Right cardiac atrium (tissue), 5 donors: ENCODE measurements at regions of chr2 and their contacts with region 1.

Region 1: GRCh38 chr2:222561817-222562645 is 93.9 kb downstream of the FARSB start:
- DNase-seq: no peak
- ATAC-seq: peak; percentile 47 to 65
- H3K4me3 ChIP-seq: no peak overlapping the region
- H3K27ac ChIP-seq: no peak overlapping the region
- H3K4me1 ChIP-seq: no peaks in the 10 kb centered on the region
- H3K27me3 ChIP-seq: no peaks in the 10 kb centered on the region

Region 2: DNA sequence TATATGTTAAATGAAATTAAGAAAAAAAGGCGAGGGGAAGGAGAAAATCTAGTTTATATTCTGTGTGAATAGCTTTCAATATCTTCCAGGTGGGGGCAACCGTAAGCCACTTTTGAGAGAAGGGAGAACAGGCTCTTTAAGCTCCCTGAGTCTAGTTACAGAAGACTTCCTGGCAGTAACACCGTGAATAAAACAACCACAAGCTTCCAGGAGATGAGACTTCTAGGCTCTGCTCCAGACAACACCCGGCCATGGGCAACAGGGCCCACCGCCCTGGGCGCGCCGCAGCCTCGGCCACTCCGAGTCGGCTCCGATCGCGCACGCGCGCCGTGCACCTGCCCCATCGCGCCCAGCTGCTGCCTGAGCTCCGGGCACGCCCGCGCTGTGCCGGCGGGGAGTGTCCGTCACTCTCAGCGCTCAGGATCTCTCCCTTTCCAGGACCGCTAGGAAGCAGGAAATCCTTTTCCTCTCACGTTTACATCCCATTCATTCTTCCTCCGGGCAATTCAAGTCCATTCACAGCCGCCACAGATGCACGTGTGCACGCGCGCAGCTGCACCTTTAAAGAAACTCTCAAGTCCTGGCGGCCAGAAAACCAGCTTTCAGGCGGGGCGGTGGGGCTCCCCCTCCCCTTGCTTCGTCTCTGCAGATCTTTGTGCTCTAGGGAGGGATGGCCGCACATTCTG is 243.9 kb before region 1 on chr2:
- intact Hi-C with region 1: loop called in 3 of 4 experiments (anchors 5 kb)
- DNase-seq: peak in 1 of 3 donors; percentile 75
- ATAC-seq: peak; percentile 72 to 81
- H3K4me3 ChIP-seq: peak overlapping the region; percentile 68
- H3K27ac ChIP-seq: no peak overlapping the region
- H3K4me1 ChIP-seq: no peaks in the 10 kb centered on the region
- H3K27me3 ChIP-seq: peaks cover under 1% of the 10 kb centered on the region